CD4-positive, alpha-beta T cell (primary cell): ENCODE measurements at regions of chr22 and their contacts with region 1.

Region 1: DNA sequence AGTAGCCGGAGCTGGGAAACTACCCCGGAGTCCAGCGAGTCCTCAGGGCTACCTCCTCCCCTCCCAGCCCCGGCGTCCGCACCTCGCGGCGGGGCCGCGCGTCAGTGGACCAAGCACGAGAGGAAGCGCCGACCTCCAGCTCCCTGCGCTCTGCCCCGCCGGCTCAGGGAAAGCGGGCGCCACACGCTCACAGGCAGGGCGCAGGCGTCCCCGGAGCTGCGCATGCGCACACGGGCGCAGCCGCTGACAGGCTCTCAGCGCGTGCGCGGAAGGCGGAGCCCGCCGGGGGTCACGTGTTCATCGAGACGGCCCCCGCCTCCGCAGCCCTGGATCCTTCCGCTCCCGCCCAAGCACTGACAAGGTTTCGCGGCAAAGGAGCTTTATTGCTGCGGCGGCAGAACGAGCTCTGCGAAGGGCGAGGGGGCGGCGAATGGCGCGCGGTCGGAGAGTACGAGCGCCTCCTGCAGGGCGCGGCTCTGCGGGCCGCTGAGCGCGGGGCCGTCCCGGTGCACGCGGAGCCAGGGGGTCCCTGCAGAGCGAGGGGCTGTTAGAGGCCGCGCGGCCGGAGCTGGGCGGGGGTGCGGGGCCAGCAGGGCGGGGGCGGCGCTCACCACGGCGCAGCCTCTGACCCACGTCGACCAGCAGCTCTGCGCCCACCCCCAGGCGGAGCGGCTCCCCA is at the start of gene SCO2:
- DNase-seq: peak; percentile 95 to 99 (median 98)
- ATAC-seq: peak; percentile 72
- H3K4me3 ChIP-seq: peak within 1 kb of the TSS; percentile 70
- H3K4me3 Mint-ChIP-seq: peak within 1 kb of the TSS; percentile 91
- H3K27ac ChIP-seq: peak within 1 kb of the TSS; percentile 81 to 88
- H3K27ac Mint-ChIP-seq: peak within 1 kb of the TSS; percentile 89
- H3K4me1 ChIP-seq: peaks cover 56% of the 10 kb centered on the region
- H3K4me1 Mint-ChIP-seq: peaks cover 28% of the 10 kb centered on the region
- H3K27me3 ChIP-seq: no peaks in the 10 kb centered on the region
- H3K27me3 Mint-ChIP-seq: no peaks in the 10 kb centered on the region
- CTCF ChIP-seq: no peak
- total RNA-seq, gene SCO2: 0.61 to 5.6 TPM

Region 2: DNA sequence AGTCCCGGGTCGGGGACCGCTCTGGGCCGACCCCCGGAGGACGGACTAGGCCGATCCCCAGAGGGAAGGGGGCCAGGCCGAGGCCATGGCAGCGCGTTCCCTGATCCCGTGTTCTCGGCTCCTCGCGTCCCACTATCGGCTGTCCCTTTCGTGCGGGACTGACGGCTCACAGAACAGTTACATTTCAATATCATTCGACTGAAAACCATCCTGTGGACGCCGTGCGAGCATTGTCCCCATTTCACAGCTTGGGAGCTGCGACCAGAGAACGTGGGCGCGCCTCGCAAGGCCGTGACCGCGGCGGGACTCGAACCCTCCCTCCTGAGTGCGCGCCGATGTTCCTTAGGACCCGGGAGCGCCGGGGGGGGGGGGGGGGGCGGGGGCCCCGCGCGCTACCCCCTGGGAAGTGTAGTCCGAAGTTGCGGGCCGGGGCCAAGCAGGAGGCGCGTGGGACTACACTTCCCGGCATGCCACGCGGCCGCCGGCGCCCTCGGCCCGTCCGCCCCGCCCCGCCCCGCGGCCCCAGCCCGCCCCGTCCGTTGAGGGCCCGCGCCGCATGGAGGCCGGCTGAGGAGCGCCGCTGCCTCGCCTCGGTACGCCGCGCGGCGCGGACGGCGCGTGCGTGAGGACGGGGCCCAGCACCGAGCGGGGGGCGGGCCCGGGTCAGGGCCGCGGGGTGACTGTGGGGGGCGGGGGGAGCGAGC is 340.0 kb before region 1 on chr22 and contains the start of gene TRABD:
- CTCF ChIA-PET with region 1: no interaction called
- POLR2A ChIA-PET with region 1: interaction called, 14 read pairs
- intact Hi-C with region 1: no loop called
- DNase-seq: peak; percentile 77 to 96 (median 88)
- ATAC-seq: peak; percentile 67
- H3K4me3 ChIP-seq: peak within 1 kb of the TSS; percentile 62
- H3K4me3 Mint-ChIP-seq: peak within 1 kb of the TSS; percentile 95
- H3K27ac ChIP-seq: peak within 1 kb of the TSS; percentile 56 to 60
- H3K27ac Mint-ChIP-seq: peak within 1 kb of the TSS; percentile 96
- H3K4me1 ChIP-seq: peaks cover 53% of the 10 kb centered on the region
- H3K4me1 Mint-ChIP-seq: peaks cover 25% of the 10 kb centered on the region
- H3K27me3 ChIP-seq: peaks cover 0 to 2% of the 10 kb centered on the region in 2 experiments
- H3K27me3 Mint-ChIP-seq: peaks cover 4% of the 10 kb centered on the region
- CTCF ChIP-seq: no peak
- total RNA-seq, gene TRABD: 184 to 193 TPM

Region 3: DNA sequence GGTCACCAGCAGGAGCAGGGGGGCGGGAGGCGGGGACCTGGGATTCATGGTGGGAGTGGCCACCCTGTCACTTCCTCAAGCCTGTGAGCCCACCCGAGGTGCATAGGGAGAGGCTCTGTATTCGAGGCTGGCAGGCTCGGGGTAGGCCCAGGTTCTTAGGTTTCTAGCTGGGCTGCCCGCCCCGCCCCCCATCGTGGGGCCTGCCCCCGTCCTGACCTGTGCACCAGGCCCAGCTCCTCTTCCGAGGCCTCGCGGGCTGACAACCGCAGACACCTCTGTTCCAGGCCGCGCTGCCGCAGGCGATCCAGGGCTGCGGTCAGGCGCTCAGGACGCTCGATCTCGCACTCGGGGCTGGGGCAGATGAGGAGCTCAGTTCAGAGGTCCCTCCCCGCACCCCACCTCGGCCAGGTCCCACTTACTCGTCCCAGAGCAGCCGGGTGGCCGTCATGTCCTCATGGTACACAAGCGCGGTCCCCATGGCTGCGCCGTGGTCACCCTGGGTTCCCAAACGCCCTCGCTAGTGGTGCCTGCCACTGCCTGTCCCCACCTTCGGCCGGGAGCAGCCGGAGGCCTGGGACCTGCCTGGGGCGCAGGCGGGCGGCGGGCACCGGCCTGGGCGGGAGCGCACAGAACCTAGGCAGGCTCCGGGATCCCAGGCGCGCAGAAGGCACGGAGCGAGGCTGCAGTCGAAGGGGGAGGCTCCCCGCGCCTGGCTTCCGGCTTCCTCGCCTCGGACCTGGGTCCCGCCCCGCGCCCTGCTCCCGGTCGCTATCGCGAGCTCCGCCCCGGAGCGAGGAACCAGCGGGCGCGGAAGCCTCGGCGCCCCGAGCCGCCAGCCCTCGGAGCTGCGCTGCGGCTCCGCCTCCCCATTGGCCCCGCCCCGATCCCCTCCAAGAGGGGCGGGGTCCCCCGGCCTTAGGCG is 274.7 kb before region 1 on chr22 and contains the start of gene HDAC10:
- CTCF ChIA-PET with region 1: interaction called, 9 read pairs
- POLR2A ChIA-PET with region 1: interaction called, 11 read pairs
- intact Hi-C with region 1: no loop called
- DNase-seq: peak; percentile 60 to 91 (median 77)
- ATAC-seq: peak; percentile 79
- H3K4me3 ChIP-seq: peak within 1 kb of the TSS; percentile 87
- H3K4me3 Mint-ChIP-seq: peak within 1 kb of the TSS; percentile 84
- H3K27ac ChIP-seq: peak within 1 kb of the TSS in 1 of 2 donors; percentile 53
- H3K27ac Mint-ChIP-seq: peak within 1 kb of the TSS; percentile 55
- H3K4me1 ChIP-seq: peaks cover 57% of the 10 kb centered on the region
- H3K4me1 Mint-ChIP-seq: peaks cover 26% of the 10 kb centered on the region
- H3K27me3 ChIP-seq: no peaks in the 10 kb centered on the region
- H3K27me3 Mint-ChIP-seq: no peaks in the 10 kb centered on the region
- CTCF ChIP-seq: no peak
- total RNA-seq, gene HDAC10: 87.3 to 88.7 TPM

Region 4: DNA sequence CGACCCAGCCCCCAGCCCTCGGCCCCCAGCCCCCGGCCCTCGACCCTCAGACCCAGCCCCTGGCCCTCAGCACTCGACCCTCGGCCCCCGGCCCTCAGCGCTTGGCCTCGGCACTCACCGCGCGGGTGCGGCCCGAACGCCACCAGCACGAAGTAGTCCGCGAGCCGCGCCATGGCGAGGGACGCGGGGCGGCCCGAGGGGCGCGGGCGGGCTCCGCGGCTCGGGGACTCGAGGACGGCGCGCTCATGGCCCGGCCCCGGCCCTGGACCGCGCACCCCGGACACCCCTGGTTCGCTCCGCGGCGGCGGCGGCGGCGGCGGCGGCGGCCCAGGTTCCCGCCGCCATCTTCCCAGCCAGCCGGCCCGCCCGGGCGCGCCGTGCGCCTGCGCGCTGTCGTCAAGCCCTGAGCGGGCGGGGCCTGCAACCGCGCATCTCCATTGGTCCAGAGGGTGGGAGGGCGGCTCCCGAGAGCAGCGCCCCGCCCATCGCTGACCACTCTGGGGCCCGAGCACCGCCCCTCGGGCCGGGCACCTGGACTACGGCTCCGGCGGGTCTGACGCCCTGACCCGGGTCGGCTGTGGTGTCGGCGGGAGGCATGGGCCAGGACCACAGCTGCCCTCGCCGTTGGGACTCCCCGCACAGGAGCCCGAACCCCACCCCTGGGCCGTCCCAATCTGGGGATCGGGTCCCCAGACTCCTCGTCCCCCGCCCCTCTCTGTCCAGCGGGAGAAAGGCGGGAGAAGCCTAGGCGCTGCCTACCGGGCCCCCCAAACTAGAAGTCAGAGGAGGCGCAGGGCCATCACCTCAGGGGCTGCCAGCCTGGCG is 50.6 kb before region 1 on chr22 and contains the start of gene SBF1:
- CTCF ChIA-PET with region 1: interaction called, 20 read pairs
- POLR2A ChIA-PET with region 1: interaction called, 39 read pairs
- intact Hi-C with region 1: loop called in 1 of 2 experiments (anchors 5 kb)
- DNase-seq: peak; percentile 73 to 95 (median 86)
- ATAC-seq: peak; percentile 64
- H3K4me3 ChIP-seq: peak within 1 kb of the TSS; percentile 80
- H3K4me3 Mint-ChIP-seq: peak within 1 kb of the TSS; percentile 92
- H3K27ac ChIP-seq: peak within 1 kb of the TSS; percentile 40 to 94
- H3K27ac Mint-ChIP-seq: peak within 1 kb of the TSS; percentile 94
- H3K4me1 ChIP-seq: peaks cover 51% of the 10 kb centered on the region
- H3K4me1 Mint-ChIP-seq: peaks cover 47% of the 10 kb centered on the region
- H3K27me3 ChIP-seq: no peaks in the 10 kb centered on the region
- H3K27me3 Mint-ChIP-seq: no peaks in the 10 kb centered on the region
- CTCF ChIP-seq: no peak
- total RNA-seq, gene SBF1: 220 to 227 TPM

Region 5: DNA sequence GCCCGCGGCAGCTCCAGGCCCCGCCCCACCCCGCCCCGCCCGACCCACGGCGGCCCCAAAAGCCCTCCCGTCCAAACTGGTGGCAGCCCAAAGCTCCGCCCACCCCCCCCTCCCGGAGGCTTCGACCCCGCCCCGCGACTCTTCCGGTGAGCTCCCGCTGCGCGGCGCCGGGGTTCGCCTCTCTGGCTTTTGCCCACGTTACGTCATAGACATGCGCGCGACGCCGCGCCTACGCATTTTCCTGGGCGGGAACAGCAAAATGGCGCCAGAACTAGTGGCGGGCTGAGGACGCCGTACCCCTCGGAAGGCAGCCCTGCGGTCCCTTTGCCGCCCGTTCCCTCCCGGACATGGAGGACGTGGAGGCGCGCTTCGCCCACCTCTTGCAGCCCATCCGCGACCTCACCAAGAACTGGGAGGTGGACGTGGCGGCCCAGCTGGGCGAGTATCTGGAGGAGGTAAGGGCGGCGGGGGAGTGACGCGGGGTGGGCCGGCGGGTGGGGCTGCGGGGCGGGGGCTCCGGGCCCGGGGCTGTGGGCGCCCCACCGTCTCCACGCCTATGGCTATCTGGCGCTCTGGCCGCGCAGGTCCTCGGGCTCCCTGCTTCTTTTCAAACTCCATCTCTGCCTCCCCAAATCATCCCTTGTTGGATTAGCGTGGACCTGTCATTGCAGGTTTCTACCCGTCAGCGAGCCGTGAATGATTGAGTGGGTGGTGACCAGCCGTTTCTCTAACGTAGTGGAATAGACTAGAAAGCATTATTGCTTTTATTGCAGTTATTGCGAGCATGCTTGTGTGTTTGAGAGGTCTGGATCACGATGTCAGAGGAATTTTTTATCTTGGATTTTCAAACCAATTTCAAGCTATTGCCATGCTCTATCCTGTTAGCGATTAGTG is 17.3 kb before region 1 on chr22 and contains the start of gene NCAPH2:
- CTCF ChIA-PET with region 1: interaction called, 42 read pairs
- POLR2A ChIA-PET with region 1: interaction called, 250 read pairs
- intact Hi-C with region 1: loop called (anchors 1 to 2 kb)
- DNase-seq: peak in 10 of 14 experiments; percentile 94 to 99 (median 97)
- ATAC-seq: peak; percentile 75
- H3K4me3 ChIP-seq: peak within 1 kb of the TSS; percentile 92
- H3K4me3 Mint-ChIP-seq: peak within 1 kb of the TSS; percentile 94
- H3K27ac ChIP-seq: peak within 1 kb of the TSS; percentile 89 to 92
- H3K27ac Mint-ChIP-seq: peak within 1 kb of the TSS; percentile 95
- H3K4me1 ChIP-seq: peaks cover 38% of the 10 kb centered on the region
- H3K4me1 Mint-ChIP-seq: peaks cover 21% of the 10 kb centered on the region
- H3K27me3 ChIP-seq: no peaks in the 10 kb centered on the region
- H3K27me3 Mint-ChIP-seq: no peaks in the 10 kb centered on the region
- CTCF ChIP-seq: no peak
- total RNA-seq, gene NCAPH2: 184 to 185 TPM

Region 6: DNA sequence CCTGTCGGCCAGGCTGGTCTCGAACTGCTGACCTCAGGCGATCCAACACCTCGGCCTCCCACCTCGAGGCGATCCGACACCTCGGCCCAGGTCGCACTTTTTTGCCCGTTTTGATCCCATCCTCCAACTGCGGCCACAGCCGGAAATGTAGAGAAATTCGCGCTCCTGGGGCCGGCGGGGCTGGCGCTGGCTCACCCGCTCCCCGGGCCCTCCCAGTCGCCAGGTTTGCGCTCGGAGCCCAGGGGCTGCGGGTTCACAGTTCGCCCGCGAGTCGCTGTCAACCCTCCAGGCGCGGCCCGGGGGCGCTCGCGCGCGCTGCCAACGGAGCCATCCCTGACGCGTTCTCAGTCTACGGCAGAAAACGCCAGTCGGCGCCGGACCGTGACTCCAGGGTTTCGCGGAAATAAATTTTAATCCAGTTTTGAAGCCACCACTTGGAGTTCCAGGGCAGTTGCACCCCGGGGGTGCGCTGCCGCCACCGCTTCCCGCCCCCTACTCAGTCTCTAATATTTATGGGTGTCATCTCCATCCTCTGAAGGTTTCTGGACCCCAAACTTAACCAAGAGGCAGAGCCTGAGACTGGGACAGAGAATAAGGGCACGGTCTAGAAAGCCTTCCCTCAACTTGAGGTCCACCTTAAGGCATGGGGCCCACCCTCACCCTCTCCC is 18.7 kb after region 1 on chr22:
- CTCF ChIA-PET with region 1: interaction called, 66 read pairs
- POLR2A ChIA-PET with region 1: interaction called, 258 read pairs
- intact Hi-C with region 1: loop called in 1 of 2 experiments (anchors 2 kb)
- DNase-seq: peak; percentile 62 to 91 (median 80)
- ATAC-seq: peak; percentile 48
- H3K4me3 ChIP-seq: peak overlapping the region; percentile 41
- H3K4me3 Mint-ChIP-seq: peak overlapping the region; percentile 74
- H3K27ac ChIP-seq: peak overlapping the region; percentile 27 to 44
- H3K27ac Mint-ChIP-seq: peak overlapping the region; percentile 83
- H3K4me1 ChIP-seq: peaks cover 63% of the 10 kb centered on the region
- H3K4me1 Mint-ChIP-seq: peaks cover 45% of the 10 kb centered on the region
- H3K27me3 ChIP-seq: no peaks in the 10 kb centered on the region
- H3K27me3 Mint-ChIP-seq: no peaks in the 10 kb centered on the region
- CTCF ChIP-seq: peak; percentile 67

Region 7: DNA sequence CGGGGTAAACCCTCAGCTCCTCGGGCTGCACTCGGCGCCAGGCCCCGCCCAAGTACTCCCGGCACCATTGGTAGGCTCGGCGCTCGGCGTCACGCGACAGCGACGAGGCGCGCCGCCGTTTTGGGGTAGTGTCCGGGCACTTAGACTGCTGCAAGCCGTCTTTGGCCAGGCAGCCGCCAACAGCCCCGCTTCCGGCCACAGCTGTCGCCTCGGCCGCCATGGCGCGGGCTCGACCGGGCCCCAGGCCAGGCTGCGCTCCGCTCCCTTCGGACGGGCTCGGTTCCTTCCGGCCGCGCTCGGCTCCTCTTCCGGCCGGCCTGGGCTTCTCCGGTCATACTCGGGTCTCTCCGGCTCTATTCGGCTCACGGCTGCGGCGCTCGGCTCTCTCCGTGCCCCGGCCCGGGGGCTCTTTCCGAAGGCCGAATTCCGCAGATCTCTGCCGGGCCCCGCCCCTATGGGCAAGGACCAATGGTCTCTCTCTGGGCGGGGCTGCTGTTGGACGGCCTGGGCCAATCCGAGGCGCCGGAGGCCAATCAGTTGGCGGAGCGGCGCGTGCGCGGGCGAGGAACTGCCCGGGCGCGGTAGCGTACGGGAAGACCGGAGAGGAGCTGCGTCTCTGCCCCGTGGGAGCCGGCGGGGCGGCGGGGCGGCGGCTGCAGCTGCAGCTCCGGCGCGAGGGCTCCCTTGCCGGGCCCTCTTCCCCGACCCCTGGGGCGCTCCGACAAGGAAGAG is 57.2 kb after region 1 on chr22 and contains the start of gene CHKB:
- CTCF ChIA-PET with region 1: interaction called, 5 read pairs
- POLR2A ChIA-PET with region 1: interaction called, 38 read pairs
- intact Hi-C with region 1: loop called in 1 of 2 experiments (anchors 5 kb)
- DNase-seq: peak; percentile 95 to 99 (median 98)
- ATAC-seq: peak; percentile 92
- H3K4me3 ChIP-seq: peak within 1 kb of the TSS; percentile 63
- H3K4me3 Mint-ChIP-seq: peak within 1 kb of the TSS; percentile 100
- H3K27ac ChIP-seq: peak within 1 kb of the TSS; percentile 91 to 95
- H3K27ac Mint-ChIP-seq: peak within 1 kb of the TSS; percentile 98
- H3K4me1 ChIP-seq: peaks cover 31% of the 10 kb centered on the region
- H3K4me1 Mint-ChIP-seq: peaks cover 35% of the 10 kb centered on the region
- H3K27me3 ChIP-seq: no peaks in the 10 kb centered on the region
- H3K27me3 Mint-ChIP-seq: no peaks in the 10 kb centered on the region
- CTCF ChIP-seq: no peak
- total RNA-seq, gene CHKB: 152 to 156 TPM